CD4-positive, alpha-beta memory T cell (primary cell): ENCODE measurements at regions of chr1 and their contacts with region 1.

Region 1: GRCh38 chr1:200139661-200140250 is 112.2 kb downstream of the NR5A2 start:
- DNase-seq: peak in 4 of 5 donors; percentile 35 to 47 (median 40)
- H3K4me3 ChIP-seq: no peak overlapping the region
- H3K4me3 Mint-ChIP-seq: no peak overlapping the region
- H3K27ac ChIP-seq: no peak overlapping the region
- H3K27ac Mint-ChIP-seq: no peak overlapping the region
- H3K4me1 ChIP-seq: no peaks in the 10 kb centered on the region
- H3K4me1 Mint-ChIP-seq: peaks cover 0 to 5% (median 0%) of the 10 kb centered on the region in 4 donors
- H3K27me3 ChIP-seq: no peaks in the 10 kb centered on the region
- H3K27me3 Mint-ChIP-seq: no peaks in the 10 kb centered on the region

Region 2: GRCh38 chr1:199684686-199685273 is 455.0 kb before region 1 on chr1:
- CTCF ChIA-PET with region 1: no interaction called
- POLR2A ChIA-PET with region 1: no interaction called
- intact Hi-C with region 1: loop called (anchors 2 kb)
- DNase-seq: peak in 4 of 5 donors; percentile 23 to 34 (median 32)
- H3K4me3 ChIP-seq: no peak overlapping the region
- H3K4me3 Mint-ChIP-seq: no peak overlapping the region
- H3K27ac ChIP-seq: no peak overlapping the region
- H3K27ac Mint-ChIP-seq: no peak overlapping the region
- H3K4me1 ChIP-seq: no peaks in the 10 kb centered on the region
- H3K4me1 Mint-ChIP-seq: no peaks in the 10 kb centered on the region
- H3K27me3 ChIP-seq: no peaks in the 10 kb centered on the region
- H3K27me3 Mint-ChIP-seq: peaks cover 6 to 7% of the 10 kb centered on the region in 2 donors

Region 3: DNA sequence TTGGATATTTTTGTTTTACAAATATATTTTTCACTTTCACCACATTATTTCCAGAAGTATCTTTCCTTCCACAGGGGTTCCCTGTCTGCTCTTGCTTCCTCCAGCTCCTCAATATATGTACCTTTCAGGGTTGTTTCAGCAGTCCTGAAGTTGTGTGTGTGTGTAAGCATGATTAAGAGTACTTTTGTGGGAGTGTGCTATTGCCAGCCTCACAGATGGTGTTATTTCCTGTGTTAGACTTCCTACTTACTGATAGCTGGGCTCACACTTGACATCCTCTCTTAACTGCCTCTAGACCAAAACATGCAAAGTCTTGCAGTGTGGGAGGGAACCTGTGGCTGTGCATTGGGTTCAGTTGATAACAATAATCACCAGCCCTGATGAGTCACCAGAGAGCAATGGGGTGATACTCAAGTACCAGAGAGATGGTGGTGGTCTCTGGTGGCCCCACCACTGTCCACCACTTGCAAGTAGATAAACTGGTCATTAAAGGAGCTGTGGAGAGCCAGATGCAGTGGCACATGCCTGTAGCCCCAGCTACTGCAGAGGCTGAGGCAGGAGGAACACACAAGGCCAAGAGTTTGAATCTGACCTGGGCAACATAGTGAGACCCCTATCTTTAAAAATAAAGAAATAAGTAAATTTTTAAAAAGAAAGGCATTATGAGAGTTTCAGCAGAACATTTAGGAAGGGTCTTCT is 14.5 kb after region 1 on chr1:
- CTCF ChIA-PET with region 1: interaction called, 10 read pairs
- POLR2A ChIA-PET with region 1: interaction called, 3 read pairs
- intact Hi-C with region 1: no loop called
- DNase-seq: peak; percentile 50 to 77 (median 54)
- H3K4me3 ChIP-seq: no peak overlapping the region
- H3K4me3 Mint-ChIP-seq: peak overlapping the region in 7 of 8 donors; percentile 56 to 94 (median 77)
- H3K27ac ChIP-seq: peak overlapping the region; percentile 55
- H3K27ac Mint-ChIP-seq: peak overlapping the region; percentile 54 to 97 (median 91)
- H3K4me1 ChIP-seq: peaks cover 36% of the 10 kb centered on the region
- H3K4me1 Mint-ChIP-seq: peaks cover 18 to 43% (median 24%) of the 10 kb centered on the region in 4 donors
- H3K27me3 ChIP-seq: no peaks in the 10 kb centered on the region
- H3K27me3 Mint-ChIP-seq: no peaks in the 10 kb centered on the region

Region 4: GRCh38 chr1:200165500-200166220 is 25.9 kb after region 1 on chr1:
- CTCF ChIA-PET with region 1: no interaction called
- POLR2A ChIA-PET with region 1: no interaction called
- intact Hi-C with region 1: no loop called
- DNase-seq: no peak
- H3K4me3 ChIP-seq: no peak overlapping the region
- H3K4me3 Mint-ChIP-seq: no peak overlapping the region
- H3K27ac ChIP-seq: no peak overlapping the region
- H3K27ac Mint-ChIP-seq: no peak overlapping the region
- H3K4me1 ChIP-seq: no peaks in the 10 kb centered on the region
- H3K4me1 Mint-ChIP-seq: no peaks in the 10 kb centered on the region
- H3K27me3 ChIP-seq: no peaks in the 10 kb centered on the region
- H3K27me3 Mint-ChIP-seq: no peaks in the 10 kb centered on the region

Region 5: GRCh38 chr1:200302192-200302920 is 162.6 kb after region 1 on chr1:
- CTCF ChIA-PET with region 1: interaction called, 20 read pairs
- POLR2A ChIA-PET with region 1: no interaction called
- intact Hi-C with region 1: loop called (anchors 1 kb)
- DNase-seq: peak; percentile 62 to 75 (median 71)
- H3K4me3 ChIP-seq: peak overlapping the region; percentile 71 to 89
- H3K4me3 Mint-ChIP-seq: peak overlapping the region; percentile 90 to 96 (median 93)
- H3K27ac ChIP-seq: peak overlapping the region; percentile 35
- H3K27ac Mint-ChIP-seq: peak overlapping the region; percentile 76 to 94 (median 87)
- H3K4me1 ChIP-seq: peaks cover 19% of the 10 kb centered on the region
- H3K4me1 Mint-ChIP-seq: peaks cover 12 to 25% (median 16%) of the 10 kb centered on the region in 4 donors
- H3K27me3 ChIP-seq: no peaks in the 10 kb centered on the region
- H3K27me3 Mint-ChIP-seq: peaks cover 0 to 1% of the 10 kb centered on the region in 2 donors

Region 6: GRCh38 chr1:200488375-200489165 is 348.8 kb after region 1 on chr1:
- CTCF ChIA-PET with region 1: interaction called, 10 read pairs
- POLR2A ChIA-PET with region 1: no interaction called
- intact Hi-C with region 1: loop called (anchors 1 kb)
- DNase-seq: peak in 4 of 5 donors; percentile 42 to 54 (median 52)
- H3K4me3 ChIP-seq: no peak overlapping the region
- H3K4me3 Mint-ChIP-seq: no peak overlapping the region
- H3K27ac ChIP-seq: no peak overlapping the region
- H3K27ac Mint-ChIP-seq: no peak overlapping the region
- H3K4me1 ChIP-seq: no peaks in the 10 kb centered on the region
- H3K4me1 Mint-ChIP-seq: peaks cover 0 to 5% (median under 1%) of the 10 kb centered on the region in 4 donors
- H3K27me3 ChIP-seq: no peaks in the 10 kb centered on the region
- H3K27me3 Mint-ChIP-seq: peaks cover 6 to 14% of the 10 kb centered on the region in 2 donors